ENCODE measurements at regions of chr5 and their contacts with region 1.

Region 1: DNA sequence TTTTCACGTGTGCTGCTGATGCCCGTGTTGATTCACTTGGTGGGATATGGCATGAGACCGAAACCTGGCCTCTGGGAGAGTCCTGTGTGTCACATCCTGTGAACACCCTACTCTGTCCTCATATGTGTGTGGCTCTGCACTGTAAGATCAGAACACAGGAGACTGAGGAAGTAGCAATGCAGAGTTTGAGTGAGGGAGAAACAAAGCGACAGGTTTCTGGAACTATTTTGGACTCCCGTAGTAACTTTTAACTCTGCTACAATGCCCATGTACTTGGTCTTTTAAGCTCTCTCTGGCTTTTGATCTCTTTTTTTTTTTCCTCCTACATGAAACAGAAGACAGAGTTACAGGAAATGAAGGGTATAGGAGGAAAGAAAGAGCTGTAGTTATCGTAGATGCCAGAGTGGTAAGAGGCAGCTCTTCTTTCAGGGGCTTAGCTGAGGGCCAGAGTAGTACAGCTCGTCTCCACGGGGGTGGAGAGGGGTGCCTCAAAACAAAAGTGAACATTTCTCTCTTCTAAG is 26.6 kb downstream of the GRAMD2B start:
- DNase-seq: peak; percentile 50 to 72 (median 63)
- H3K4me3 ChIP-seq: peak overlapping the region; percentile 32 to 44
- H3K4me3 Mint-ChIP-seq: peak overlapping the region; percentile 83 to 94 (median 90)
- H3K27ac ChIP-seq: peak overlapping the region; percentile 87
- H3K27ac Mint-ChIP-seq: peak overlapping the region; percentile 95 to 100 (median 98)
- H3K4me1 ChIP-seq: peaks cover 57% of the 10 kb centered on the region
- H3K4me1 Mint-ChIP-seq: peaks cover 45 to 64% (median 55%) of the 10 kb centered on the region in 4 donors
- H3K27me3 ChIP-seq: no peaks in the 10 kb centered on the region
- H3K27me3 Mint-ChIP-seq: no peaks in the 10 kb centered on the region

Region 2: GRCh38 chr5:126003309-126003708 is 446.5 kb before region 1 on chr5:
- CTCF ChIA-PET with region 1: no interaction called
- POLR2A ChIA-PET with region 1: no interaction called
- intact Hi-C with region 1: no loop called
- DNase-seq: no peak
- H3K4me3 ChIP-seq: no peak overlapping the region
- H3K4me3 Mint-ChIP-seq: no peak overlapping the region
- H3K27ac ChIP-seq: no peak overlapping the region
- H3K27ac Mint-ChIP-seq: no peak overlapping the region
- H3K4me1 ChIP-seq: no peaks in the 10 kb centered on the region
- H3K4me1 Mint-ChIP-seq: no peaks in the 10 kb centered on the region
- H3K27me3 ChIP-seq: no peaks in the 10 kb centered on the region
- H3K27me3 Mint-ChIP-seq: no peaks in the 10 kb centered on the region

Region 3: DNA sequence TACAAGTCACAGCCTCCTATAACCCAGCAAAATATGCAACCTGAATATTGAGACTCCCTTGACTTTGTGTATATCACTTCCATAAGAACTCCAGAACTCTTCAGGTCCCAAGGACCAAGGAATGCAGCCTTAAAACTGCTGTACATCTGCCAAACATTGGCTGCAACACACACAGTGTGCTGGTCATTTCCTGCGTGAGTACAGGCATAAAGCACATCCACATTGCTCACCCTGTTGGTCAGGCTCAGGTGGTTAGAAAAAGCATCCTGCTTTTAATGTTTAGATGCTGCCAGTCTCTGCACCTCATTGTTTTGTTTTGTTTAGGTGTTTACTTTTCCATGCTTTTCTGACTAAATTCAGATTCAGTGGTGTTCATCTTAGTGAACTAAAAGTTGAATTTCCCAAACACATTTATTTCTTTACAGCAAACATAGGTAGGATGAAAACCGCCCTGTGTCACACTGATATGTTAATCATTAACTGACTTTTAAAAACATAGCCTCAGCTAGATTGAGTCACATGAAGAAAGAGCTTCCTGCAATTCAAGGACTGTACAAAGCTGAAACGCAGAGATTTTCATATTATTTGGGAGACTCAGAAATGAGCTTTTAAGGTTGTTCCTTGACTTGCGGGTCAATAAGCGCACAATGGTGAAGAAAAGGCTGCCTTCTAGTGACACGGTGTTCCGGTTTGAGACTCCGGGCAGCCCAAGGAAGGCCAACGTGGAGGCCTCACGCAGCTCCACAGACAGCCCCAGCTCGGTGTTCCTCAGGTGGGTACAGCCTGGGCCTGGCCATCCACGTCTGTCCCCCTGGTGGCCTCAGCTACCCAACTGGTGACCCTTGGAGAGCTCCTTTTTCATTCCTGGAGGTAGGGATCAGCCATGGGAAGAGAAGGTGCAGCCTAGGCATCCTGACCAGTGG is 78.8 kb before region 1 on chr5:
- CTCF ChIA-PET with region 1: no interaction called
- POLR2A ChIA-PET with region 1: no interaction called
- intact Hi-C with region 1: no loop called
- DNase-seq: no peak
- H3K4me3 ChIP-seq: no peak overlapping the region
- H3K4me3 Mint-ChIP-seq: no peak overlapping the region
- H3K27ac ChIP-seq: no peak overlapping the region
- H3K27ac Mint-ChIP-seq: no peak overlapping the region
- H3K4me1 ChIP-seq: peaks cover 19% of the 10 kb centered on the region
- H3K4me1 Mint-ChIP-seq: peaks cover 12 to 15% (median 14%) of the 10 kb centered on the region in 4 donors
- H3K27me3 ChIP-seq: no peaks in the 10 kb centered on the region
- H3K27me3 Mint-ChIP-seq: no peaks in the 10 kb centered on the region

Region 4: GRCh38 chr5:126384985-126385384 is 64.8 kb before region 1 on chr5:
- CTCF ChIA-PET with region 1: no interaction called
- POLR2A ChIA-PET with region 1: no interaction called
- intact Hi-C with region 1: no loop called
- DNase-seq: no peak
- H3K4me3 ChIP-seq: no peak overlapping the region
- H3K4me3 Mint-ChIP-seq: no peak overlapping the region
- H3K27ac ChIP-seq: no peak overlapping the region
- H3K27ac Mint-ChIP-seq: no peak overlapping the region
- H3K4me1 ChIP-seq: no peaks in the 10 kb centered on the region
- H3K4me1 Mint-ChIP-seq: no peaks in the 10 kb centered on the region
- H3K27me3 ChIP-seq: no peaks in the 10 kb centered on the region
- H3K27me3 Mint-ChIP-seq: peaks cover 0 to 4% of the 10 kb centered on the region in 2 donors

Region 5: DNA sequence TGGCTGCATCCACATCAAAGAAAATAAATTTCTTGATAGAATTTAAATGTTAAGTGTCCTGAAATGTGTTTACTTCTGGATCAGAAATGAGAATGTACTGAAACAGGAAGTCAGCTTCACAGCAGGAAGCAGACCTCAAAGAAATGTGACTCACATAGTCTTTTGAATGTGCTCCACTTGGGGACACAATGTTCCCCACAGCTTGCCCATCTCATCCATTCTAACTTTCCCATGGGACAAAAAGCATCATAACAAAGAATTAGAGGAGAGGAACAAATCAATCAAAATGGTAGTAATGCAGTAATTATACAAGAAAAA is 59.1 kb after region 1 on chr5:
- CTCF ChIA-PET with region 1: no interaction called
- POLR2A ChIA-PET with region 1: interaction called, 5 read pairs
- intact Hi-C with region 1: loop called (anchors 5 kb)
- DNase-seq: peak in 3 of 5 donors; percentile 43 to 60 (median 45)
- H3K4me3 ChIP-seq: peak overlapping the region; percentile 2 to 39
- H3K4me3 Mint-ChIP-seq: peak overlapping the region; percentile 57 to 88 (median 80)
- H3K27ac ChIP-seq: peak overlapping the region; percentile 29
- H3K27ac Mint-ChIP-seq: peak overlapping the region; percentile 39 to 95 (median 88)
- H3K4me1 ChIP-seq: peaks cover 28% of the 10 kb centered on the region
- H3K4me1 Mint-ChIP-seq: peaks cover 22 to 40% (median 35%) of the 10 kb centered on the region in 4 donors
- H3K27me3 ChIP-seq: no peaks in the 10 kb centered on the region
- H3K27me3 Mint-ChIP-seq: no peaks in the 10 kb centered on the region

Region 6: GRCh38 chr5:126723643-126724042 is 273.8 kb after region 1 on chr5:
- CTCF ChIA-PET with region 1: no interaction called
- POLR2A ChIA-PET with region 1: no interaction called
- intact Hi-C with region 1: no loop called
- DNase-seq: no peak
- H3K4me3 ChIP-seq: no peak overlapping the region
- H3K4me3 Mint-ChIP-seq: no peak overlapping the region
- H3K27ac ChIP-seq: no peak overlapping the region
- H3K27ac Mint-ChIP-seq: no peak overlapping the region
- H3K4me1 ChIP-seq: no peaks in the 10 kb centered on the region
- H3K4me1 Mint-ChIP-seq: no peaks in the 10 kb centered on the region
- H3K27me3 ChIP-seq: no peaks in the 10 kb centered on the region
- H3K27me3 Mint-ChIP-seq: peaks cover 0 to 2% of the 10 kb centered on the region in 2 donors